ENCODE measurements at regions of chr6 and their contacts with region 1.

Region 1: GRCh38 chr6:119147101-119148053 is 68.9 kb upstream of the FAM184A start:
- DNase-seq: peak; percentile 93
- H3K4me3 ChIP-seq: no peak overlapping the region
- H3K27ac ChIP-seq: peak overlapping the region; percentile 54
- H3K4me1 ChIP-seq: peaks cover 24% of the 10 kb centered on the region
- H3K27me3 ChIP-seq: no peaks in the 10 kb centered on the region
- CTCF ChIP-seq: no peak

Region 2: GRCh38 chr6:118761645-118762044 is 385.7 kb before region 1 on chr6:
- CTCF ChIA-PET with region 1: no interaction called
- dilution Hi-C with region 1: no loop called
- in situ Hi-C with region 1: no loop called
- intact Hi-C with region 1: no loop called
- DNase-seq: no peak
- H3K4me3 ChIP-seq: no peak overlapping the region
- H3K27ac ChIP-seq: no peak overlapping the region
- H3K4me1 ChIP-seq: peaks cover 8% of the 10 kb centered on the region
- H3K27me3 ChIP-seq: peaks cover 2% of the 10 kb centered on the region
- CTCF ChIP-seq: no peak

Region 3: DNA sequence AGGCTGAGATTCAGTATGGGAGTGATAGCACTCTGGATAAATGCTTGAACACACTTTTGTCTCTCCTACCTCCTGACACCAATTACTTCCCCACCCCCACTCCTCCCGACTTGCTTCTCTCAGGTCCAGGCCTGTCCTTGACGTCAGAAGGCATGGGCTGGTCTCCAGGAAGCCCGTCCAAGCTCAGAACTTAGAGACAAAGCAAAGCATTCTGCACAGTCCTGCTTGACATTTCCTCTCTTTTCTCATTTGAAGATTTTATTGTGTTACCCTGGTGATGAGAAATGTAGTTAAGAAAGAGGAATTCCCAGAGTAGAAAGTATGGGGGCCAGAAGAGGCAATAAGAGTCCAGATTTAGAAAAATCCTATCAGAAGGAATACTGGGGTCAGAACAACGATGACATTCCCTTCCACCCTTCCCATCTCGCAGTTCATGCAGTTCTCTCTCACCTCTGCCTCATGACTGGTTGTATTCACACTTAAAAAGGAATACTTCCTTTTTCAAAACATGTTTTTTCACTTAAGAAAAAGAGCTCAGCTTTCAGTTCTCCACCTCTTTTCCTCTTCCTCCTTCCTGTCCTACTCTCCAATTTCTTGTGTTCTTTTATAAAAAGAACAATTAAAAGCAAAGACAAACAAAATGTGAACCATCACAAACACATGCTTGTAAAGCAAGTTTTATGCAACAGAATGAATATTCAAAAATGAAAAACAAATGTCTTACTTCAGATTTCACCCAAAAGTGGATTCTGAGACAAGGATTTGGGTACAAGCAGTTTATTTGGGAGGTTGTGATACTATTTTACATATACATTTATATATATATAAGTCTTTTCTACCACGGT is 50.4 kb before region 1 on chr6:
- CTCF ChIA-PET with region 1: no interaction called
- dilution Hi-C with region 1: no loop called
- in situ Hi-C with region 1: no loop called
- intact Hi-C with region 1: no loop called
- DNase-seq: peak; percentile 92
- H3K4me3 ChIP-seq: no peak overlapping the region
- H3K27ac ChIP-seq: peak overlapping the region; percentile 15
- H3K4me1 ChIP-seq: no peaks in the 10 kb centered on the region
- H3K27me3 ChIP-seq: no peaks in the 10 kb centered on the region
- CTCF ChIP-seq: no peak

Region 4: GRCh38 chr6:119129148-119129967 is 18.0 kb before region 1 on chr6:
- CTCF ChIA-PET with region 1: interaction called, 4 read pairs
- dilution Hi-C with region 1: no loop called
- in situ Hi-C with region 1: no loop called
- intact Hi-C with region 1: loop called (anchors 1 kb)
- DNase-seq: peak; percentile 53
- H3K4me3 ChIP-seq: no peak overlapping the region
- H3K27ac ChIP-seq: peak overlapping the region; percentile 58
- H3K4me1 ChIP-seq: peaks cover 12% of the 10 kb centered on the region
- H3K27me3 ChIP-seq: no peaks in the 10 kb centered on the region
- CTCF ChIP-seq: peak; percentile 86 to 93

Region 5: GRCh38 chr6:119627908-119628669 is 480.7 kb after region 1 on chr6:
- CTCF ChIA-PET with region 1: no interaction called
- dilution Hi-C with region 1: no loop called
- in situ Hi-C with region 1: no loop called
- intact Hi-C with region 1: loop called (anchors 1 kb)
- DNase-seq: peak; percentile 80
- H3K4me3 ChIP-seq: no peak overlapping the region
- H3K27ac ChIP-seq: peak overlapping the region; percentile 59
- H3K4me1 ChIP-seq: peaks cover 17% of the 10 kb centered on the region
- H3K27me3 ChIP-seq: no peaks in the 10 kb centered on the region
- CTCF ChIP-seq: peak; percentile 5 to 46

Region 6: GRCh38 chr6:119978274-119978889 is 831.0 kb after region 1 on chr6:
- CTCF ChIA-PET with region 1: no interaction called
- dilution Hi-C with region 1: no loop called
- in situ Hi-C with region 1: no loop called
- intact Hi-C with region 1: loop called (anchors 2 kb)
- DNase-seq: peak; percentile 17
- H3K4me3 ChIP-seq: no peak overlapping the region
- H3K27ac ChIP-seq: no peak overlapping the region
- H3K4me1 ChIP-seq: no peaks in the 10 kb centered on the region
- H3K27me3 ChIP-seq: no peaks in the 10 kb centered on the region
- CTCF ChIP-seq: peak; percentile 57 to 77

Region 7: GRCh38 chr6:120077489-120077888 is 930.1 kb after region 1 on chr6:
- CTCF ChIA-PET with region 1: no interaction called
- dilution Hi-C with region 1: no loop called
- in situ Hi-C with region 1: no loop called
- intact Hi-C with region 1: loop called (anchors 2 kb)
- DNase-seq: peak; percentile 8
- H3K4me3 ChIP-seq: no peak overlapping the region
- H3K27ac ChIP-seq: no peak overlapping the region
- H3K4me1 ChIP-seq: no peaks in the 10 kb centered on the region
- H3K27me3 ChIP-seq: no peaks in the 10 kb centered on the region
- CTCF ChIP-seq: peak; percentile 34 to 69

Region 8: GRCh38 chr6:120826253-120826652 is 1678.9 kb after region 1 on chr6:
- CTCF ChIA-PET with region 1: no interaction called
- dilution Hi-C with region 1: no loop called
- in situ Hi-C with region 1: no loop called
- intact Hi-C with region 1: loop called (anchors 10 kb)
- DNase-seq: peak; percentile 9
- H3K4me3 ChIP-seq: no peak overlapping the region
- H3K27ac ChIP-seq: no peak overlapping the region
- H3K4me1 ChIP-seq: no peaks in the 10 kb centered on the region
- H3K27me3 ChIP-seq: no peaks in the 10 kb centered on the region
- CTCF ChIP-seq: peak; percentile 77 to 84